ENCODE measurements at regions of chr10 and their contacts with region 1.

Region 1: GRCh38 chr10:71255808-71256660 is 43.7 kb downstream of the UNC5B start:
- DNase-seq: peak; percentile 55
- H3K4me3 ChIP-seq: no peak overlapping the region
- H3K27me3 ChIP-seq: no peaks in the 10 kb centered on the region
- CTCF ChIP-seq: no peak

Region 2: GRCh38 chr10:71232089-71232998 is 23.7 kb before region 1 on chr10:
- CTCF ChIA-PET with region 1: no interaction called
- POLR2A ChIA-PET with region 1: no interaction called
- DNase-seq: no peak
- H3K4me3 ChIP-seq: no peak overlapping the region
- H3K27me3 ChIP-seq: no peaks in the 10 kb centered on the region
- CTCF ChIP-seq: no peak

Region 3: DNA sequence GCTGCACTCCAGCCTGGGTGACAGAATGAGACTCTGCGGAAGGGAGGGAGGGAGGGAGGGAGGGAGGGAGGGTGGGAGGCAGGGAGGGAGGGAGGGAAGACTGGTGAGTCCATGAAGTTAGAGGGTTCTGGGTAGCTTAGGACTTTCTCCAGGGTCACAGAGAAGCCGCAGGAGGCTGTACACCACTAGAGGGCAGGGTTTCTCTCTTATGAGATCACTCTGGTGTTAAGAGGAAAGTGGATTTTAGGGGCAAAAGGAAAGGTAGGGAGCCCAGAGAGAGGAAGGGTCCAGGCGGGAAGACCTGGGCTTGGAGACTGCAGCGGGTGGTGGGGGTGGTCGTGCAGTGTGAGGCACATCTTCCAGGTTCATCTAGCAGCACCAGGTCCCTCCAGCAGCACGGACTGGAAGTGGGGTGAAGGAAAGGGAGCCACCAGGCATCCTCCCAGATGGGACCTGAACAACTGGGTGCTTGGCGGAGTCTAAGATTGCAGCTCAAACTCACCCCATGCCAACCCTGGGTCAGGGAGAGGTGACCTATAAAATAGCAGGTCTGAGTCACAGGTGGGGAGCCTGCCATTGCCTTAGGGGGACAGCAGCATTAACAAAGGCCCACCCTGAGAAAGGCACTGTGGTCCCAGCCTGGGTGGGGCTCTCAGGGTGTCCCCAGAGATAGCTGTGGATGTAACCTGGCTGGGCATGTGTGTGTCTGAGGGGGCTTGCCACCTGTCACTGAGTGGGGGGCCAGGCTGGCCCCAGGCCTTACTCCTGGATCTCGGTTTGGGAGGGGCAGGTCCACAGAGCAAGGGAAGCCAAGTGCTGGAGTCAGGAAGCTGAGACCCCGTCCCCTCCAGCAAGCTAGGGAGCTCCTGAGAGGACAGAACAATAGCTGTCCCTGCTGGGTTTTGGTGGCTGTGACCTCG is 14.5 kb after region 1 on chr10:
- CTCF ChIA-PET with region 1: interaction called, 48 read pairs
- POLR2A ChIA-PET with region 1: no interaction called
- DNase-seq: no peak
- H3K4me3 ChIP-seq: no peak overlapping the region
- H3K27me3 ChIP-seq: no peaks in the 10 kb centered on the region
- CTCF ChIP-seq: peak; percentile 81

Measured in BJ (cell line).